Activated naive CD4-positive, alpha-beta T cell treated with anti-CD3 and anti-CD28 coated beads for 36 hours (primary cell): ENCODE measurements at regions of chr17 and their contacts with region 1.

Region 1: DNA sequence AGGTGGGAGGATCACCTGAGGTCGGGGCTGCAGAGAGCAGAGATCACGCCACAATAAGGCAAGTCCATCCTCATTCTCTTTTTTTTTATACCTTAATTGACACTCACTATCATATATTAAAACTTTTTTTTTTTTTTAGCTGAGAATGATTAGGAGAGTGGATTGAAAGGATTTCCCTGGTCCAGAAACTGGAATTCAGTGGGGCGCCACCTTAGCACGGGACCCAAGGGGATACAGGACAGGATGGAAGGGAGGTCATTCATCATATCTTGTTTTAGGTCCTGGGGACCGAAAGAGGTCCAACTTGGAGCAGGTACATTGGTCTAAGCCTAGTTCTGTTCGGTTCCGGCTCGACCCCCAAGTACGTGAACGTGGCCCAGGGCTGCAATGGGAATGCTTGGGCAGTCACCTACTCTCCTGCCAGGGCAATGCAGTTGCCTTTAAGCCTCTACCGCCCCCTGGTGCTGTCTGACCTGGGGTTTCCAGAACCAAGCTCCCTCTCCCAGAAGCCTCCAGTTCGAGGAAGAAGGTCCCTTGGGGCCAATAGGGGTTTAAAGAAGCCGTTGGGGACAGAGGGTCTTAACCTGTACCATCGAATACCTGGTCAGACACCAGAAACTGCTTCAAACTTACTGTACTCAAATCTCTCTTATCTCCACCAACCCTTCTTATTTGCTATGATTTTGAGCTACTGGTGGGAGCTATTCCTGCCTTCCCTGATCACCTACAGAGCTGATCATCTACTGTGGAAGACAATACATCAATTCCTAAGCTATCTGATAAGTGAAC is 19.9 kb upstream of the GPATCH8 start:
- DNase-seq: peak; percentile 87
- H3K4me3 Mint-ChIP-seq: no peak overlapping the region
- H3K27ac Mint-ChIP-seq: no peak overlapping the region
- H3K4me1 Mint-ChIP-seq: no peaks in the 10 kb centered on the region
- H3K27me3 Mint-ChIP-seq: peaks cover 2% of the 10 kb centered on the region

Region 2: GRCh38 chr17:44385287-44386181 is 137.5 kb before region 1 on chr17:
- CTCF ChIA-PET with region 1: interaction called, 3 read pairs
- intact Hi-C with region 1: loop called (anchors 1 kb)
- DNase-seq: peak; percentile 92
- H3K4me3 Mint-ChIP-seq: peak overlapping the region; percentile 63
- H3K27ac Mint-ChIP-seq: no peak overlapping the region
- H3K4me1 Mint-ChIP-seq: peaks cover 9% of the 10 kb centered on the region
- H3K27me3 Mint-ChIP-seq: peaks cover 19% of the 10 kb centered on the region

Region 3: GRCh38 chr17:44400226-44400847 is 122.7 kb before region 1 on chr17:
- CTCF ChIA-PET with region 1: interaction called, 3 read pairs
- intact Hi-C with region 1: loop called (anchors 1 kb)
- DNase-seq: peak; percentile 27
- H3K4me3 Mint-ChIP-seq: no peak overlapping the region
- H3K27ac Mint-ChIP-seq: no peak overlapping the region
- H3K4me1 Mint-ChIP-seq: peaks cover 2% of the 10 kb centered on the region
- H3K27me3 Mint-ChIP-seq: no peaks in the 10 kb centered on the region

Region 4: DNA sequence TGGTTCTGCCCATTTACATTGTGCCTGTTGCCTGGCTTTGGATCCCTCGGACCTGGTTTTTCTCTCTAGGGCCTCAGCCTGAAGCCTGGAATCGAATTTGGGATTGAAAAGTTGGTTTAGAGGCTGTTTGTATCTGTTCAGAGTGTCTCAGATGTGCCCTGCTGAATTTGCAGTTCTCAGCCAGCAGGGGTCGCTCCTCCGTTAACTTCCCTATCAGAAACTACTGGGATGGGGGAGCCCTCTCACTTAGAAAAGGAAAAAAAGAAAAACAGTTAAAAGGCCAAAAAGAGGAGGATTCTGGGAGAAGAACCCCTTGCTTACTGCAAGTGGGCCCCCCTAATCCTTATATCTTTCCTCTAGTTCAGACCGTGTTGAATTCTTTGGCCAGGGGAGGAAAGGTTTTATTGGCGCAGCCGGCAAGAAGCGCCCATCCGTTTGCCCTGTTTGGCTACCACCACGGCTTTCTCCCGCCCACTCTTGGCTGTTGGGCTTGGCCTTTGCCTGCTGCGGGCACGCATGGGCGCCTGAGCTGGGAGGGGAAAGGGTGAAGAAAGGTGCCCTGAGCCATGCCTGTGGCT is 42.9 kb after region 1 on chr17:
- CTCF ChIA-PET with region 1: no interaction called
- intact Hi-C with region 1: no loop called
- DNase-seq: no peak
- H3K4me3 Mint-ChIP-seq: no peak overlapping the region
- H3K27ac Mint-ChIP-seq: no peak overlapping the region
- H3K4me1 Mint-ChIP-seq: no peaks in the 10 kb centered on the region
- H3K27me3 Mint-ChIP-seq: peaks cover 35% of the 10 kb centered on the region